Naive thymus-derived CD4-positive, alpha-beta T cell (primary cell): ENCODE measurements at regions of chr5 and their contacts with region 1.

Region 1: DNA sequence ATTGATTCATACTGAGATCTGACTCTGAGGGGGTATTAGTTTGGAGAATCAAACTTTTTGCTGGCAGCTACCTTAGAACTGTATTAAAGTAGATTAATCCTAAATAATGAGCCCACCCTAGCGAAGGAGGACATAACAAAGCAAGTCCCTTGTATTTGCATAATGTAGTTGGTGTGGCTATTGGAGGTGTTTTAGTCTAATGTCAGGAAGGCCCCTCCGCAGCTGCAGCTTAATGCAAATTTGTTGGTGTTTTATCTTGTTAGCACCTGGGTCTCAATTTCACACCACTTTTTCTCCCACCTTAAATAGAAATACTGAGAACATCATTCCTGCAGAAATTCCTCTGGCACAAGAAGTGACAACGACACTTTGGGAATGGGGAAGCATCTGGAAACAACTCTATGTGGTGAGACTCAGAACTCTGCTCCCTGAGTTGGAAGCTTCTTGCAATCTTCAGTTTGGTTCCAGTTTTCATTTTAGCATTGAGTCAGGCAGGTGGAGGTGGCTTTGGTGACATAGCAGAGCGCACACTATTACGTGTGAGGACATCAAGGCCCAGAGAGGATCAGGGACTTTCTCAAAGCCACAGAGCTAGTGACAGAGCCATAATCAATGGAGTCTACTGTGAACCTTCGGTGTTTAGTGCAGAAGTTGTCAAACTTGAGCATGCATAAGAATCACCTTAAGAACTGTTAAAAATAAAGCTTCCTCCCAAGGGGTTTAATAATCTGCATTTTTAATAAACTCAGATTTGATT is 33.9 kb downstream of the DOCK2 start:
- DNase-seq: no peak
- ATAC-seq: no peak
- H3K4me3 ChIP-seq: no peak overlapping the region
- H3K4me3 Mint-ChIP-seq: peak overlapping the region in 1 of 10 donors; percentile 5
- H3K27ac ChIP-seq: no peak overlapping the region
- H3K27ac Mint-ChIP-seq: peak overlapping the region in 2 of 9 donors; percentile 48 to 81
- H3K4me1 ChIP-seq: no peaks in the 10 kb centered on the region
- H3K4me1 Mint-ChIP-seq: peaks cover 4 to 32% (median 8%) of the 10 kb centered on the region in 7 donors
- H3K27me3 ChIP-seq: no peaks in the 10 kb centered on the region
- H3K27me3 Mint-ChIP-seq: no peaks in the 10 kb centered on the region

Region 2: GRCh38 chr5:168987543-168988300 is 683.2 kb before region 1 on chr5:
- CTCF ChIA-PET with region 1: no interaction called
- POLR2A ChIA-PET with region 1: no interaction called
- intact Hi-C with region 1: loop called in 1 of 2 experiments (anchors 10 kb)
- DNase-seq: peak in 7 of 9 donors; percentile 8 to 54 (median 13)
- ATAC-seq: no peak
- H3K4me3 ChIP-seq: no peak overlapping the region
- H3K4me3 Mint-ChIP-seq: no peak overlapping the region
- H3K27ac ChIP-seq: no peak overlapping the region
- H3K27ac Mint-ChIP-seq: no peak overlapping the region
- H3K4me1 ChIP-seq: peaks cover 0 to 4% of the 10 kb centered on the region in 2 donors
- H3K4me1 Mint-ChIP-seq: no peaks in the 10 kb centered on the region
- H3K27me3 ChIP-seq: peaks cover 0 to 3% of the 10 kb centered on the region in 2 donors
- H3K27me3 Mint-ChIP-seq: peaks cover 3 to 23% (median 16%) of the 10 kb centered on the region in 5 donors

Region 3: GRCh38 chr5:169331292-169331852 is 339.6 kb before region 1 on chr5:
- CTCF ChIA-PET with region 1: no interaction called
- POLR2A ChIA-PET with region 1: no interaction called
- intact Hi-C with region 1: loop called in 1 of 2 experiments (anchors 10 kb)
- DNase-seq: no peak
- ATAC-seq: no peak
- H3K4me3 ChIP-seq: no peak overlapping the region
- H3K4me3 Mint-ChIP-seq: no peak overlapping the region
- H3K27ac ChIP-seq: no peak overlapping the region
- H3K27ac Mint-ChIP-seq: no peak overlapping the region
- H3K4me1 ChIP-seq: no peaks in the 10 kb centered on the region
- H3K4me1 Mint-ChIP-seq: no peaks in the 10 kb centered on the region
- H3K27me3 ChIP-seq: no peaks in the 10 kb centered on the region
- H3K27me3 Mint-ChIP-seq: peaks cover 7 to 19% (median 14%) of the 10 kb centered on the region in 5 donors

Region 4: DNA sequence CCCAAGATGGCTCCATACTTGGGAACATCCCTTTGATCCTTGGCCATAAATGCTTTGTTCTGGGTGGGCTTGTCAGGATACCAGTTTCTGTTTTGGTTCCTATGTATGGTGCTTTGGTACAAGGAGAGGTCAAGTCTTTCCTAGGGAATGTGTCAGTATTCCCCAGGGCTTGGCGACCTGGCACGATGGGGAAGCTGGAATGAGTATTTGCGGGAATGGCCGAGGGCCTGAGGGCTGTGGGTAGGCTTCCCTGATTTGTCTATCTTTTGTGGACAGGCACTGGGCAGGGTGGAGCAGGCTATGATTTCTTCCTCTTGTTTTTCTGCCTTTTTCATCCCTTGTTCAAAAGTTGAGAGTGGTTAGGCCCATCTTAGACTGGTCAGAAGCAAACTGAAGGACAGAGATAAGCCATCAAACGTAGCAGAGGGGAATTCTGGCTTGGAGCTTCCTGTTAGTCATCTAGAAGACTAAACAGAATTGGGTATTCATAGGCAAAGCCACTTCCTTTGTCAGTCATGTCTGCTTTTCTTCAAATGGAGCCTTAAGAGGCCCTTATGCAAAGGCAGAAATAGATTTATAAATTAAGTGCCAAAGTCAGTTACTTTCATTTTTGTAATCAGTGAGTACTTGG is 20.1 kb before region 1 on chr5:
- CTCF ChIA-PET with region 1: interaction called, 3 read pairs
- POLR2A ChIA-PET with region 1: no interaction called
- intact Hi-C with region 1: loop called in 1 of 2 experiments (anchors 2 kb)
- DNase-seq: no peak
- ATAC-seq: peak; percentile 61
- H3K4me3 ChIP-seq: peak overlapping the region; percentile 25
- H3K4me3 Mint-ChIP-seq: peak overlapping the region; percentile 20 to 89 (median 66)
- H3K27ac ChIP-seq: peak overlapping the region; percentile 24
- H3K27ac Mint-ChIP-seq: peak overlapping the region; percentile 73 to 96 (median 91)
- H3K4me1 ChIP-seq: peaks cover 62 to 74% of the 10 kb centered on the region in 2 donors
- H3K4me1 Mint-ChIP-seq: peaks cover 79 to 99% (median 85%) of the 10 kb centered on the region in 7 donors
- H3K27me3 ChIP-seq: no peaks in the 10 kb centered on the region
- H3K27me3 Mint-ChIP-seq: no peaks in the 10 kb centered on the region